Colonic mucosa (tissue), 4 donors: ENCODE measurements at regions of chr15 and their contacts with region 1.

Region 1: GRCh38 chr15:77107531-77108355 is 36.8 kb upstream of the TSPAN3 start:
- DNase-seq: peak; percentile 58
- H3K4me3 ChIP-seq: no peak overlapping the region
- H3K27ac ChIP-seq: no peak overlapping the region
- H3K4me1 ChIP-seq: no peaks in the 10 kb centered on the region
- H3K27me3 ChIP-seq: no peaks in the 10 kb centered on the region
- CTCF ChIP-seq: peak; percentile 56

Region 2: GRCh38 chr15:77059786-77060361 is 47.9 kb before region 1 on chr15:
- intact Hi-C with region 1: no loop called
- DNase-seq: no peak
- H3K4me3 ChIP-seq: no peak overlapping the region
- H3K27ac ChIP-seq: no peak overlapping the region
- H3K4me1 ChIP-seq: peaks cover 15% of the 10 kb centered on the region
- H3K27me3 ChIP-seq: no peaks in the 10 kb centered on the region
- CTCF ChIP-seq: no peak

Region 3: GRCh38 chr15:77543159-77543882 is 435.6 kb after region 1 on chr15:
- intact Hi-C with region 1: loop called (anchors 5 kb)
- DNase-seq: peak; percentile 86
- H3K4me3 ChIP-seq: peak overlapping the region; percentile 50
- H3K27ac ChIP-seq: no peak overlapping the region
- H3K4me1 ChIP-seq: peaks cover 10% of the 10 kb centered on the region
- H3K27me3 ChIP-seq: no peaks in the 10 kb centered on the region
- CTCF ChIP-seq: peak; percentile 98

Region 4: DNA sequence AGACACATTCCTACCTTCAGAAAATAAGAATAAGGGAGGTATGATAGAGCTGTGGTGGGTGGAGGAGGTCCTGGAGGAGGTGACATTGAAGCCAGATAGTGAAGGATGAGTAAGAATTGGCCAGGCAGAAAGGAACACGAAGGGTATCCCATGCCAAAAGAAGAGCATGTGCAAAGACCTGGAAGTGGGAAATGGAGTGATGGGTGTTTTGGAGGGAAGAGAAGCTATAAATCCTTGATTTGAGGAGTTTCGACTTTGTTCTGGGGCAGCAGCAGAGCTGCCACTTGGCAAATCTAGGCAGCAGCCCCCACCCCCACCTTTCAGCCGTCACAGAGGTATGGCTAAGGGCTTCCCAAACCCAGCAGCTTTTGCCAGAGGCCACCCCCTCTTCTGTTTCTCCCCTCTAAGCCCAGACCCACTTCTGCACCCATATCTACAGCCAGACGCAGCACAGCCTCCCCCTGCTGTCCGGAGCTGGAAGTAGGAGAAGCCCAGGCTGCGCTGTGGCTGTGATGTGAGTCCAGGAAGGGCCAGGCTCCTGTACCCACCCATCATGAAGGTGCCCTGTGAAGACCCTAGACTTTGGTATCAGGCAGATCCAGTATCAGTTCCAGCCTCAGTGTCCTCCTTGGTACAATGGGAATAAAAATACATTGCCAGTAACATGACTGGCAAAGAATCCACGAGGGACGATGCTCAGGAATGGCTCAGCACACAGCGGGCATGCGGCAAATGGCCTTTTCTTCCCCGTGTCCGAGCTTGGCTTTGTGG is 713.6 kb after region 1 on chr15:
- intact Hi-C with region 1: loop called (anchors 10 kb)
- DNase-seq: peak; percentile 49
- H3K4me3 ChIP-seq: no peak overlapping the region
- H3K27ac ChIP-seq: no peak overlapping the region
- H3K4me1 ChIP-seq: no peaks in the 10 kb centered on the region
- H3K27me3 ChIP-seq: peaks cover 42% of the 10 kb centered on the region
- CTCF ChIP-seq: peak; percentile 43